ENCODE measurements at regions of chr1 and their contacts with region 1.

Region 1: DNA sequence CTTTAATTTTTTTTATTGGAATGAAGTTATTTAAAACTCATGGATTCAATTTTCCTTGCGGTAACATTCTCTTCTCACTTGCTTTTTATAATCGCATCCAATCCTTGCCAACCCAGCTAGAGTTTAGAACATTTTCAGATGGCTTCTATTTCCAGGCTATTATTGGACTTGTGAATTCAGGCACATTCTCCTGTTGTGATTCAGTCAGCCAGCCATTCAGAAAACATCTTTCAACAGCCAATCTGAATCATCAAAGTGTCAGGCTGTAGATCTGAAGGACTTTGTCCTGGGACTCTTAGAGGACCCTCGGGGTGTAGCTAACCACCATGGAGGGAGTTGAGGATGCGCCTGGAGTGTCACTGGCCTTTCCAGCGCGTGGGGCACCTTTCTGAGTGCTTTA is 92.4 kb downstream of the PRDM2 start:
- DNase-seq: no peak
- H3K4me3 Mint-ChIP-seq: no peak overlapping the region
- H3K27ac Mint-ChIP-seq: no peak overlapping the region
- H3K4me1 Mint-ChIP-seq: peaks cover 70% of the 10 kb centered on the region
- H3K27me3 Mint-ChIP-seq: no peaks in the 10 kb centered on the region

Region 2: DNA sequence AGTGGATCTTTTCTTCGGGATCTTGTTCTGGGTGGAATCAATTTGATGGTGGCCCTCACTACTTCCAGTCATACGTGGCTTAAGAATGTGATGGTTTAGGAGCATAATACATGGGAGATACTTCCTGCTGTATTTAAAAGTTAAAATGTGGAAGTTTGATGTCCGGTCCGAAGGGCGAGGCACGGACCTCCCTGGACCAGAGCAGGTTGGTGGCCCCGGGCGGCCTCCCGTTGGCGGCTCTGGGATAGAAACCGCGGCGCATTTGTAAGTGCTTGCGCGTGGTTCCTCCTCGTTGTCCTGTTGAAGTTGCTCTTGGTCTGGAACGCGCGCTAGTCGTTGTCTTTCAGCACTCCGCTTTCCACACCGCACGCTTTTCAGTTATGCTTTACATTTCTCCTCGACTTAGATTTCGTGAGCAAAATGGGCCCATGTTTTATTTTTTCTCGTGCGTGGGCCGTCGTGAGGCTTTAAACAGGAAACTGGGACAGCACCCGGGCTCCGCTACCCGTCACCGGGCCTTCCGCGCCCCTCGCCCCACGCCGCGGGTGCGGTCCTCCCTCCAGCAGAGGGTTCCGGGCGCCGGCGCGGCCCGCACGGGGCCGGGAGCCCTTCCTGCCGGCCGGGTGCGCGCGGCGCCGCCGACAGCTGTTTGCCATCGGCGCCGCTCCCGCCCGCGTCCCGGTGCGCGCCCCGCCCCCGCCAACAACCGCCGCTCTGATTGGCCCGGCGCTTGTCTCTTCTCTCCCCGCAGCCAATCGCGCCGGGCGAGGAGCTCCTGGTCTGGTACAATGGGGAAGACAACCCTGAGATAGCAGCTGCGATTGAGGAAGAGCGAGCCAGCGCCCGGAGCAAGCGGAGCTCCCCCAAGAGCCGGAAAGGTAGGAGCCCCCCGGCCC is 43.6 kb before region 1 on chr1:
- CTCF ChIA-PET with region 1: no interaction called
- POLR2A ChIA-PET with region 1: interaction called, 5 read pairs
- intact Hi-C with region 1: loop called (anchors 5 kb)
- DNase-seq: peak; percentile 96
- H3K4me3 Mint-ChIP-seq: peak overlapping the region; percentile 83
- H3K27ac Mint-ChIP-seq: peak overlapping the region; percentile 93
- H3K4me1 Mint-ChIP-seq: peaks cover 50% of the 10 kb centered on the region
- H3K27me3 Mint-ChIP-seq: no peaks in the 10 kb centered on the region

Region 3: DNA sequence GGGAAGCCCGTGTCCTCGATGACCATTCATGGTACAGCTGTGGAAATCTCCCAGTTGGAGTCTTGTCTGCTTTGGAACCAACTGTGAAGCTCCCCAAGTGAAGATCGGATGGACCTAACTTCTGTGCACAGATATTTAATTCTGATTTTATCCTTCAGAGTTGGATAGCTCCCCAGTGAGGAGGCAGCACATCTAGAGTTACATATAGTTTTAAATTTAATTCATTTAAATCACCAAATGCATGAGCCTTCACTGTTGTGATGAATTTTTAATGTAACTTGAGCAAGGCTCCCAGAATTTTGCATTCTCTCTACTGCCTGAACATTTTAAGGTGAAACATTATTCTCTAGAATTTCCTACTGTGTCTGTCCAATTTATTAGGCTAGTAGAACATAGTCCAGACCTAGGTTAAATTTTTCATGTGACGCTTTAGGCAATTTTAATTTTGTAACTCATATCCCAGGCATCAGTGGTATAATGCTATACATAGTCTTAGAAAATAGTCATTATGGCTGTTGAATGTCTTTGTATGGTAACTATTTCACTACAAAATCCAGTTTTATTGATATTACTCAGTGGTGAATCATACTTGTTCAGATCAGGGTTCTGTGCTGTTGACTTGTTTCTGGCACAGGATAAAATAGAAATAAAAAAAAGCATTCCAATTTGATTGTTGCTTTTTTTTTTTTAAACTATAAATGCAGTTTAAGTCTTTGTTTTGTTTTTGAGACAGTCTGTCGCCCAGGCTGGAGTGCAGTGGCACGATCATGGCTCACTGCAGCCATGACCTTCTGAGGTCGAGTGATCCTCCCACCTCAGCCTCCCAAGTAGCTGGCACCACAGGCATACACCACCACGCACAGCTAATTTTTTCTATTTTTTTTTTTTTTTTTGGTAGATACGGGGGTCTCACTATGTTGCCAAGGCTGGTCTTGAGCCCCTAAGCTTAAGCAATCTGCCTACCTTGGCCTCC is 25.5 kb before region 1 on chr1:
- CTCF ChIA-PET with region 1: no interaction called
- POLR2A ChIA-PET with region 1: no interaction called
- intact Hi-C with region 1: loop called (anchors 2 kb)
- DNase-seq: no peak
- H3K4me3 Mint-ChIP-seq: no peak overlapping the region
- H3K27ac Mint-ChIP-seq: peak overlapping the region; percentile 61
- H3K4me1 Mint-ChIP-seq: peaks cover 71% of the 10 kb centered on the region
- H3K27me3 Mint-ChIP-seq: no peaks in the 10 kb centered on the region

Region 4: DNA sequence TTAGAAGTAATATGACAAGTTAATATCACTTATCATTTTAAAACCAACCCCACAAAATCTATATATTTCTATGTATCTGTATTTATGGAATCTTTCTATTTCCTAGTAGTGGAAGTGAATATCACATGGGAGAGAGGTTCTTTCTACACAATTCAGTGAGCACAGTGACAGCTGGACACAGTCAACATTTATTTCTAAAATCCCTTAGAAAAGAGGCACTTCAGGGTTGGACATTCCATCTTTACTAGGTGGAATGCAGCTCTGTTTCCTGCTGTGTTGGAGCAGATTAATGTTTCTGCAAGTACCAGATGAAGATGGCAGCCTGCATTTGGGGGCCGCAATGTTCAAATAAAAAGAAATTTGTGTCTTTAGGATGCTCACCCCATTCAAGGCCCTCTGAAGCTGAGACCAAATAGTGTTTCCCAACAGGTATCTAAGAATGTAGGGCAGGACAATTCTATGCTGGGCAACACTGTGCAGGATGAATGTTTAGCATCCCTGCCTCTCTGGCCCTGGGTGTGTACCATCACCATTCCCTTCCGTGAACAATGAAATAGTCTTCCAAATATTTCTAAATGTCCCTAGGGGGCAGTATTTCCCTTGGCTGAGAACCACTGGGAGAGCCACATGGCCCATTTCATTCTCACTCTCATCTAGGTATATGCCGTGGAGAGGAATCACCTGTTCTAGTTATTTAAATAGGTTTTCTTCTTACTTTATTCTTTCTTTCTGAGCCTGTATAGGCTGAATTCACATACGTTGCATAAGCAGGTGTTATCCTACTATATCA is 302.4 kb after region 1 on chr1:
- CTCF ChIA-PET with region 1: no interaction called
- POLR2A ChIA-PET with region 1: no interaction called
- intact Hi-C with region 1: no loop called
- DNase-seq: no peak
- H3K4me3 Mint-ChIP-seq: no peak overlapping the region
- H3K27ac Mint-ChIP-seq: no peak overlapping the region
- H3K4me1 Mint-ChIP-seq: no peaks in the 10 kb centered on the region
- H3K27me3 Mint-ChIP-seq: peaks cover 10% of the 10 kb centered on the region

Measured in activated CD4-positive, alpha-beta memory T cell treated with anti-CD3 and anti-CD28 coated beads for 36 hours (primary cell).